Motor neuron (in vitro differentiated cells): ENCODE measurements at regions of chr2 and their contacts with region 1.

Region 1: DNA sequence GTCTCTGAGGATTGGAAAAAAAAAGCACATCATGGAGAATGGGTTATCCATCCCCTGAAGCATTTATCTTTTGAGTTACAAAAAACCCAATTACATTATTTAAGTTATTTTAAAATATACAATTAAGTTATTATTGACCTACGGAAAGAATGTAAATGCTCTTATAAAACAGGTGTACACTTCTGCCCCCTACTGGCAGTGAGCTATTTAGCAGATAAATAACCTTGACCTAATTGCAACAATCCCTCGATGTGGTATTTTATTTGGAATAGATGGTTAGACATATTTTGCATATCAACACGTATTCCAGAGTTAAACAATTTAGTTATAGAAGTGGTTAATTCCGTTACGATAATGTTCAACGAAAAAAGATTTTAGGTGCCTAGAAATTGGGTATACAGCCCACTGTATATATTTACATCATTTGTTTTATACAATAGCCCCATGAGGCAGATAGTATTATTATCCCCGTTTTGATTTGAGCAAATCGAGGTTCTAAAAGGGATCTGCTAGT is 9.1 kb upstream of the DAW1 start:
- ATAC-seq: no peak
- H3K4me3 ChIP-seq: no peak overlapping the region
- H3K27ac ChIP-seq: no peak overlapping the region
- H3K4me1 ChIP-seq: no peaks in the 10 kb centered on the region

Region 2: DNA sequence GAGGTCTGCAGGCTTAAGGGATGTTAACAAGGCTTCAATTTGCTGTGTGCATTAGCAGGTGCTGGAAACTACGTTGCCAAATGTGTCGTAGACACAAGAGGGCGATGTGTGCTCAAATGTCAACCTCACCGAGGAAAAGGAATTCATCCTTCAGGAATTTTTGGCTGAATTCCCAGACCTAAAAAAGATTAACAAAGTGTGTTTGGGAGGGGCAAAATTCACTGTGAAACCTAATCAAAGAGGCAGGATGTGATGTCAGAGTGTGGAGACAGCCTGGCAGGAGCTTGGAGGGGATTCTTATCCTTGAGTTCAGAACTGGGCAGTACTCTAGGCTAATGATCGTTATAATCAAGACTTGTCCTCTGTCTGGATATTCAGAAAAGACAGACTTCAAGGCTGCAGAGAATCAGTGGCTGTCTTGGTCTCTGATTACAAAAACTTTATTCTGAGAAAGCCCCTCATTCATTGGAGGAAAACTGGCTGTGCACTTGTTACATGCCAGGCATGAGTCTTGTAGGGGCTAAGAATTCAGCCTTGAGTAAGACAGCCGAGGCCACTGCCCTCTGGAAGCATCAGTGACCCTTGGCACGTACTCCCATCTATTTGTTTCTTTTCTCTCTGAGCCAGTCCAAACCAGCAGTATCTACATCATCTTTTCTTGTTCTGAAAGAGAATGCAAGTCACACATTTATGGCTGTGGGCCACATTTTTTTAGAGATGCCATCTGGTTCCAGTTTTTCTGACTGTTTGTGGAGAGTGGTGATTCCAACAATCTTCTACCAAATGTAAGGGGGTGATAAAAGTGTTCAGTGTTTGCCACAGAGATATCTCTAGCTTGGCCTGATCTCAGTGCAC is 455.9 kb before region 1 on chr2:
- in situ Hi-C with region 1: loop called in 1 of 9 experiments (anchors 25 kb)
- ATAC-seq: peak; percentile 63 to 96 (median 90)
- H3K4me3 ChIP-seq: no peak overlapping the region
- H3K27ac ChIP-seq: no peak overlapping the region
- H3K4me1 ChIP-seq: peaks cover 7 to 8% of the 10 kb centered on the region in 2 donors

Region 3: DNA sequence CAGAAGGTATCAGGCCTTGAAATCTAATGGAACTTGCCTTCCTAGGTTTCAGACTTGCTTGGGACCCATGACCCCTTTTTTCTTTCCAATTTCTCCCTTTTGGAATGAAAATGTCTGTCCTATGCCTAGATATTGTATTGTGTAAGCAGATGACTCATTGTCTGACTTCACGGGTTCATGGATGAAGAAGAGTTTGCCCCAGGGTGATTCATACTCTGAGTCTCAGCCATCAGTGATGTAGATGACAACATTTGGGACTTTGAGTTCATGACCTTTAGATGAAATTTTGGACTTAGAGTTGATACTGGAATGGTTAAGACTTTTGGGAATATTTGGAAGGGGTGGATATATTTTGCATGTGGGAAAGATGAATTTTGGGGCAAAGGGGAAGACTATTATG is 206.8 kb before region 1 on chr2:
- in situ Hi-C with region 1: loop called in 1 of 9 experiments (anchors 25 kb)
- ATAC-seq: peak in 4 of 8 experiments; percentile 64 to 84 (median 75)
- H3K4me3 ChIP-seq: no peak overlapping the region
- H3K27ac ChIP-seq: no peak overlapping the region
- H3K4me1 ChIP-seq: peaks cover 0 to 8% of the 10 kb centered on the region in 2 donors

Region 4: DNA sequence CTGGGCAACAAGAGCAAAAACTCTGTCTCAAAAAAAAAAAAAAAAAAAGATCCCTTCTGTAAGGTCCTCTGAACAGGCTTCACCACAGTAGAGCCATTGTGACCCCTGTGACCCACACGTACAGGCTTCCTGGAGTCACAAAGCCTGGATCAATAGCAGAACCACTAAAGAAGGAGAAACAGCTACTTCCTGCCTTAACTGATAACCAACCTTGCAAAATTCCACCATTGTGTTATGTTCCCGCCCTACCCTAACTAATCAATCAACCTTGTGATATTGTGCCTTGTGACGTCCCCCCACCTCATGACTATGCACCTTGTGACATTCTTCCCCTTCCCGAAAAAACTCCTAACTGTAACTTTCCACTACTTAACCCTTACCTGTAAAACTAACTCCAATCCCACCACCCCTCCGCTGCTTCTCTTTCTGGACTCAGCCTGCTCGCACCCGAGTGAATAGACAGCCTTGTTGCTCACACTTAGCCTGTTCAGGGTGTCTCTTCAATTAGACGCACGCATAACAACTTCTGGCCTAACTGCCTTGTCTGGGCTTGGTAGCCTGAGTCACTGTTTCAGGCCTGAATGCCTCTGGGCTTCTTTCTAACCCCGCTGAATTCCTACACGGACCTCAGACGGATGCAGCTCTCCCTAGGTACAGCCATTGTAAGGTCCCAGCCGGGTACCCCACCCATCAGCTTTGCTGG is 102.7 kb before region 1 on chr2:
- in situ Hi-C with region 1: no loop called
- ATAC-seq: peak in 4 of 8 experiments; percentile 35 to 80 (median 62)
- H3K4me3 ChIP-seq: no peak overlapping the region
- H3K27ac ChIP-seq: no peak overlapping the region
- H3K4me1 ChIP-seq: no peaks in the 10 kb centered on the region

Region 5: DNA sequence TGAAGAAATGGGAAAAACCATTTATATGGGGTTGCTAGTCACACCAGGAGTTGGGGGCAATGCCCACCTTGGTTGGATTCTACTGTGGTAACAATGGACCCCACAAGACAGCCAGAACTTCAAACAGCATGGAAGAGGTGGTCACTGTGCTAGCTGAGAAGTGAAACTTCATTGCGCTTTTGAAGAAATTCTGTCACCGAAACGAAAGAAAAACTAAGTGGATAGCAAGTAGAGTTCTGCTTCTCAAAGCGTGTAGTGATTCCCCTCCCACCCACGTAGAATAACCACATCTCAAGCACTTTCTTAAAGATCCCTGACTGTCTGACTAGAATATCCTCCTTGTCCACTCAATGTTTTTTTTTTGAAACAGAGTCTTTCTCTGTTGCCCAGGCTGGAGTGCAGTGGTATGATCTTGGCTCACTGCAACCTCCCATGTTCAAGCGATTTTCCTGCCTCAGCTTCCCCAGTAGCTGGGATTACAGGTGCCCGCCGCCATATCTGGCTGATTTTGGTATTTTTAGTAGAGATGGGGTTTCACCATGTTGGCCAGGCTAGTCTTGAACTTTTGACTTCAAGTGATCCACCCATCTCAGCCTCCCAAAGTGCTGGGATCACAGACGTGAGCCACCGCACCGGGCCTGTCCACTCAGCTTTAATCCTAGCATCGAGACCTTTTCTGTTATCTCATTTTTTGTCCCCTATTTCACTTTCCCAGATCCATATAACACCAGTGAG is 78.7 kb before region 1 on chr2:
- in situ Hi-C with region 1: loop called in 1 of 9 experiments (anchors 10 kb)
- ATAC-seq: no peak
- H3K4me3 ChIP-seq: no peak overlapping the region
- H3K27ac ChIP-seq: no peak overlapping the region
- H3K4me1 ChIP-seq: no peaks in the 10 kb centered on the region